H1 (cell line): ENCODE measurements at regions of chr18 and their contacts with region 1.

Region 1: GRCh38 chr18:31255953-31256352 is 62.0 kb upstream of the DSG1 start:
- DNase-seq: no peak
- H3K4me3 ChIP-seq: no peak overlapping the region
- H3K27ac ChIP-seq: no peak overlapping the region
- H3K4me1 ChIP-seq: no peaks in the 10 kb centered on the region
- H3K27me3 ChIP-seq: no peaks in the 10 kb centered on the region
- CTCF ChIP-seq: no peak
- EP300 ChIP-seq: no peak
- POLR2A ChIP-seq: no peak
- RAD21 ChIP-seq: no peak

Region 2: DNA sequence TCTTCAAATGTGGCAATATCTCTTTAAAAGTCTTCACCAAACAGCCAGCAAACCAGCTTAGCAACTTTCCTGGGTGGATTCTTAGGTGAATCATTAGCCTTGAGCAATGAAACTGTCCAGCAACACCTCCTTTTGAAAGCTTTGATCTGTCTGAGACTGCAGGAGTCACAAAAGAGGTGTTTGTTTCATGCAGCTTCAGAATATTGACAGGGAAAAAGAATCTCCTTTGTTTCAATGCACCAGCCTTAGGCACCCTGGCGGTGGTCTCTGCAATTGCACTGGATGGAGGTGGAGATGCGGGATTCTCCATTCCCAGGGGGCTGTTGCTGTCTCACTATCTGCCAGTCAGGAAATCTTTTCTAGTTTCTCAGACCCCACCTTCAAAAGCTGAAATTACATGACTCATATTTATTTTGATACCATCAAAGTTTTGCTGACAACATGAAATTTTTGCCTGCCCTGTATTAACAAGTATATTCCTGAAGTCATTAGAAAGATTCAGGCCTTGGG is 14.0 kb before region 1 on chr18:
- CTCF ChIA-PET with region 1: interaction called, 15 read pairs
- POLR2A ChIA-PET with region 1: interaction called, 3 read pairs
- DNase-seq: peak; percentile 23 to 84
- H3K4me3 ChIP-seq: no peak overlapping the region
- H3K27ac ChIP-seq: no peak overlapping the region
- H3K4me1 ChIP-seq: peaks cover 0 to 18% (median 8%) of the 10 kb centered on the region in 4 experiments; a peak in 4 of 7 replicates
- H3K27me3 ChIP-seq: no peaks in the 10 kb centered on the region
- CTCF ChIP-seq: peak; percentile 60 to 84 (median 79)
- EP300 ChIP-seq: no peak
- POLR2A ChIP-seq: no peak
- RAD21 ChIP-seq: peak; percentile 57 to 68

Region 3: DNA sequence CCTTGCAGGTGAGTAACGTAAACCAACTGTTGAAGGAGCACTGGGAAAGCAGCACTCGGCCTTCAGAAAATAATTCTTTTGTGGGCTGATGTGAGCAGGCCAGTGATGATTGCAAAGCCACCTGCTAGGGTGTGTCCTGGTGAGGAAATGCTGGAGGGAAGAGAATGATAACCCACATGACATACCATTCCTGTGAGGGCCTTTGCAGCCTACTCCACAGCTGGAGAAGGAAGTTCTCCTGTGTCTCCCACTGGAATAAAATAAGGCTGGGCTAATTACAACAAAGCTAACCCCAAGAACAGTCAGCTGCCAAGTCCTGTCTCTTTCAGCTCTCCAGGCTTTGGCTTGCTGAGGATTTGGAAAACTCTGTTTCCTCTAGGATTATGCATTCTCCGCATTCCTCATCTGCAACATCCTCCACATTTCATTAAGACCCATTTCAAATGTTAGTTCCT is 45.3 kb after region 1 on chr18:
- CTCF ChIA-PET with region 1: no interaction called
- POLR2A ChIA-PET with region 1: no interaction called
- DNase-seq: peak in 1 of 2 experiments; percentile 3
- H3K4me3 ChIP-seq: no peak overlapping the region
- H3K27ac ChIP-seq: no peak overlapping the region
- H3K4me1 ChIP-seq: peaks cover 0 to 7% (median 4%) of the 10 kb centered on the region in 4 experiments; a peak in 4 of 7 replicates
- H3K27me3 ChIP-seq: no peaks in the 10 kb centered on the region
- CTCF ChIP-seq: no peak
- EP300 ChIP-seq: no peak
- POLR2A ChIP-seq: no peak
- RAD21 ChIP-seq: no peak